A673 (cell line): ENCODE measurements at regions of chr2 and their contacts with region 1.

Region 1: DNA sequence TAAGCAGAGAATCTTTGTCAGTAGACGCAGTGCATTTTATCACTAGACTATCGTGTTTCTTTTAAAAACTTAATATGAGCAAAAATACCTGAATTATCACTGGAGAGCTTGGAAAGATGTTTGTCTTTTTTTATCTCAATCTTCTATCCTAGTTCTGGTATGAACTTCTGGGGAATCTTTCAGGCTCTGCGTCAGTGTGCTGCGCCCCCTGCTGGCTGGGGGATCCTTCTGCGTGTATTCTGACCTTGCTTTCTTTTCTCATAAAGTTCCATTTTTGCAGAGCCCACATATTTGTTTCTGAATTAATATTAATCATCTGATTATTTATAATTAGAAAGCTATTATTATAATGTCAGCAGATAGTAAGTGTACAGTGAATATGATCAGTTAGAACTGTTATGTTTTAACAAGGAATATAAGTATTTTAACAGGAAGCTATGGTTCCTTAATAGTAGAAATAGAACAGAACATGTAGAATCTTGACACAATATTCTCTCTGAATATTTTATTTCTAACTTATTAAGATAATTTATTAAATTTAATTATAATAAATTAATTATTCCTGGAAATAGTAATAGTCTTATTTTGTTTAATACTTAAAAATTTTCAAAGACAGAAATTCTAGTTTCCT is 945.0 kb upstream of the CRIM1 start:
- DNase-seq: peak; percentile 72
- H3K4me3 ChIP-seq: no peak overlapping the region
- H3K27ac ChIP-seq: no peak overlapping the region
- H3K4me1 ChIP-seq: no peaks in the 10 kb centered on the region
- H3K27me3 ChIP-seq: no peaks in the 10 kb centered on the region
- CTCF ChIP-seq: peak; percentile 98

Region 2: DNA sequence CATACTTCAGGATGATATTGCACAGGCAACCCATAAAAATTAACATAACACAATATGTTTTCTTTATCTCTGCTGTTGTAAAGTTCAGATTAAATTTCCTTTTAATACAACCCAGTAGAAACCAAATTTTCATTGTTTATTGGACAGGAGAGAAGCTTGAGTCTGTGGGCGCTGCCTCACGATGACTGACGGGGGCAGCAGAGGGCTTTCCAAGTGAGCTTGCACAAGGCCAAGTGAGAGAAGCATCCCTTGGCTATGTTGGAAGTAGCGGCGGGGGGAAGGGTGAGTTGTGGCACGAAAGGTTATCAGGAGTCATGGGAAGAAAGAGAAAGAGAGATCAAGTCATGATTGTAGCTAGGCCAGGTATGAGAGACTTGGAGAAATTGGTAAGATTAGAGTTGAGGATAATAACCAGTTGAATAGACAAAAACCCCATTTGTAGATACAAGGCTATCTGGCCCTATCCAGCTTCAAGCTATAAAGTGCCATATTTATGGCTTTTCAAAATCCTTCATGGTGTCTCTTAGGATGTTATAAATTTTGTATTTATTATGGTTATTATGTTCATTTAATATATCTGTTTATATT is 1397.7 kb before region 1 on chr2:
- CTCF ChIA-PET with region 1: interaction called, 3 read pairs
- POLR2A ChIA-PET with region 1: no interaction called
- intact Hi-C with region 1: loop called (anchors 2 kb)
- DNase-seq: peak; percentile 85
- H3K4me3 ChIP-seq: no peak overlapping the region
- H3K27ac ChIP-seq: no peak overlapping the region
- H3K4me1 ChIP-seq: peaks cover 4% of the 10 kb centered on the region
- H3K27me3 ChIP-seq: no peaks in the 10 kb centered on the region
- CTCF ChIP-seq: peak; percentile 91

Region 3: DNA sequence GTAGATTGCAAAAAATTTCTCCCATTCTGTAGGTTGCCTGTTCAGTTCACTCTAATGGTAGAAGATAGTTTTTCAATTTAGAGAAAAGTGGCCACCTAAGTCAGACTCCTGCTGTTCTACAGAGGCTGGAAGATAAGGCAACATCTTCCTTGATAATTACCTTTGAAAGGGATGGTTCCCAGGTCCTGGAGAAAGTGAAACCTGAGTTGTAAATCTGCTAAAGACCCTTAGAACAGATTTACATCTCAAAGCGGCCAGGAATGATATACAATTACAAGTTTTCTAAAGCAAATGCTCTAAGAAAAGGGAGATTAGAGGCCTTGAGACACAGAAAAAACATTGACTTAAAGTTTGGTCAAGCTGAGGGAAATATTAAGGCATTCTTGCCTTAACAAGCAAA is 461.2 kb before region 1 on chr2:
- CTCF ChIA-PET with region 1: no interaction called
- POLR2A ChIA-PET with region 1: no interaction called
- intact Hi-C with region 1: no loop called
- DNase-seq: no peak
- H3K4me3 ChIP-seq: no peak overlapping the region
- H3K27ac ChIP-seq: no peak overlapping the region
- H3K4me1 ChIP-seq: no peaks in the 10 kb centered on the region
- H3K27me3 ChIP-seq: no peaks in the 10 kb centered on the region
- CTCF ChIP-seq: no peak

Region 4: DNA sequence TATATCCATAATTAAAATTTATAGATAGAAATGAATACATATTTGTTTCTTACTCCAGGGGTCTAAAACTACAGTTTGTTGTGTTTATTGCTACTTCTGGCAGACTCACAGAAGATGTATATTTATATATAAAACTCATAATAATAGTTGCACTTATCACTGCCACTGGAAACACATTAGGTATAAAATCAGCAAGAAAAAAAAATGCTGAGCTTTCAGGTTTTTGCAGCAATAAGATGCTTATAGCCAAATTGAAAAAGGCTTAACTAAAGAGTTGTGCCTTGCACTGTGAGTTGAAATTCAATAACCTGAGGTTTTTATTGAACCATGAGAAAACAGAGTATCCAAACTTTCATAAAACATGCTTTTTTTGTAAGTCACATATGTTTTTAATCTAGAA is 321.1 kb after region 1 on chr2:
- CTCF ChIA-PET with region 1: no interaction called
- POLR2A ChIA-PET with region 1: no interaction called
- intact Hi-C with region 1: no loop called
- DNase-seq: no peak
- H3K4me3 ChIP-seq: no peak overlapping the region
- H3K27ac ChIP-seq: no peak overlapping the region
- H3K4me1 ChIP-seq: no peaks in the 10 kb centered on the region
- H3K27me3 ChIP-seq: no peaks in the 10 kb centered on the region
- CTCF ChIP-seq: no peak

Region 5: GRCh38 chr2:37301408-37301807 is 1890.9 kb after region 1 on chr2:
- CTCF ChIA-PET with region 1: no interaction called
- POLR2A ChIA-PET with region 1: no interaction called
- intact Hi-C with region 1: no loop called
- DNase-seq: peak; percentile 22
- H3K4me3 ChIP-seq: no peak overlapping the region
- H3K27ac ChIP-seq: no peak overlapping the region
- H3K4me1 ChIP-seq: peaks cover 3% of the 10 kb centered on the region
- H3K27me3 ChIP-seq: no peaks in the 10 kb centered on the region
- CTCF ChIP-seq: no peak